ENCODE measurements at regions of chr7 and their contacts with region 1.

Region 1: DNA sequence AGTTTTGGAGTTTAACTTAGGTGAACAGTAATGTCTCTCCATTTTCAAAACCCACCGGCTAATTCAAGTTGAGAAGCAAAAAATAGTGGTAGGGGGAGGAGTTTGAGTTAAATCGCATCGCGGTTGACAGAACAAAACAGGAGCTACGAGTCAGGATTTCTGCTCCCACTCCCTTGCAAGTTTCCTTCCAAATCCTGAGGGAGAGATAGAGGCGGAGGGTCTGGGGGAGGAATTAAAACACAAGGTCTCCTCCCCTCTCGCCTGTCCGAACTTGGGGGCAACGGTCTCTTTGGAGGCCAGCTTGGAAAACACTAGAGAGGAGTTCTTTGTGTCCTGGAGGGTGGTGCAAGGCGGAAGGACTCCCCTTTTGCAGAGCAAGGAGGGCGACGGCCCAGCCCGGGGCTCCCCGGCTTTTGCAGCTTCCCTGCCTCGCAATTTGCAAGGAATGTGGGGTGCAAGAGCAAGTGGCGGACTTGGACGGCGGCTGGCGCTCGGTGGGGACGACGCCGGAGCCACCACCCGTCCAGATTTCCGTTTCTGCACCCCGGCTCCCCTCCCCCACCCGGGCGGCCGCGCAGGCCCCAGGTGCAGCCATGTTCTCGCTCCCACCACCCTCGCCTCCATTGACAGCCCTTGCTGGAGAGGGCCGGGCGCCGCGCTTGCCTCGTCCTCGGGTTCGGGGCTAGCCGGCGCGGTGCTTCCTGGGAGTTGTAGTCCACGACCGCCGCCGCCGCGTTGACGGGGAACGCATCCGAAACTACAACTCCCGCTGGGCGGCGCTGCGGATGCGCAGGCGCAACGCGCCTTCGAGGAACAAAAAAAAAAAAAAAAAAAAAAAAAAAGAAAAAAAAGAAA is 454 bp upstream of the GTF2I start:
- DNase-seq: peak; percentile 94
- ATAC-seq: peak; percentile 85
- H3K4me3 ChIP-seq: peak overlapping the region; percentile 73 to 91 (median 84)
- H3K27ac ChIP-seq: peak overlapping the region; percentile 98
- H3K4me1 ChIP-seq: peaks cover 66% of the 10 kb centered on the region
- H3K27me3 ChIP-seq: no peaks in the 10 kb centered on the region; a peak in 1 of 5 replicates
- CTCF ChIP-seq: peak; percentile 38
- EP300 ChIP-seq: no peak
- POLR2A ChIP-seq: peak; percentile 73
- RAD21 ChIP-seq: peak; percentile 54; the same call in 1 of the 2 replicates

Region 2: GRCh38 chr7:74443543-74444247 is 213.4 kb before region 1 on chr7:
- CTCF ChIA-PET with region 1: no interaction called
- POLR2A ChIA-PET with region 1: no interaction called
- in situ Hi-C with region 1: no loop called
- intact Hi-C with region 1: no loop called
- DNase-seq: no peak
- ATAC-seq: no peak; the same call in 2 of the 3 replicates
- H3K4me3 ChIP-seq: no peak overlapping the region
- H3K27ac ChIP-seq: no peak overlapping the region
- H3K4me1 ChIP-seq: peaks cover 36% of the 10 kb centered on the region
- H3K27me3 ChIP-seq: peaks cover 0 to 5% of the 10 kb centered on the region in 2 experiments; a peak in 3 of 5 replicates
- CTCF ChIP-seq: no peak
- EP300 ChIP-seq: no peak
- POLR2A ChIP-seq: no peak
- RAD21 ChIP-seq: no peak

Region 3: DNA sequence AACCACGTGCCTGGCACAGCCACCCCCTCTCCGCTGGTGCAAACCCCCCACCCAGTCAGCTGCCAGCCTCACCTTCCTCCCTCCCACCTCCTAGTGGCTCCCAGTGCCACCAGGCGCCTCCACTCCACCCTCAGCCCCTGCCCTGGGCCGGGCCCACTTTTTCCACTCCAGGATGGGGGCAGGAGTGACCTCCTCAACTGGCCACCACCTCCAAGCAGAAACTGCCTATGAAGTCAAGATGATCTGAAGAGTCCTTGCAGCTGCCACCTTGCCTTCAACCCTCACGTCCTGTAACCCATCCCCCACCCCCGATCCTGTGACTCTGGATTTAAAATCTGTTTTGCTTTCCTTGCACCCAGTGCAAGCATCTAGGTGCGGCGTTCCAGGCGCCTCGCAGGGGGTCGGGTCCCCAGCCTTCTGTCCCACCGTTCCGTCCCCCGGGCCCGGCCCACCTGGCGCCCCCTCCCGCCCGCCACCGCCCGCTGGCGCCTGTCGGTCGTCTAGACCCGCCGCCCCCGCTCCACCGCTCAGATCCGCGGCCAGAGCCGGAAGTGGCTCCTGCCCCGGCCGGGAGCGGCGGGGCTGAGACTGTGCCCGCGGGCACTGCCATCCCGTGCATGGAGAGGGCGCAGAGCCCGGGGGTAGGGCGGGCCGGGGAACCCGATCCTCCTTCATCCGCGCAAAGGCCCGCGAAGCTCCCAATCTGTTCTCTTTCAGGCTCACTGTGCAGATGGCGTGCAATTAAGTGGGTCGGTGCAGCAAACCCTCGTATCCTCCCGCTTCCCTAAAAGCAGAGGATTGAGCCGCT is 50.8 kb before region 1 on chr7:
- CTCF ChIA-PET with region 1: no interaction called
- POLR2A ChIA-PET with region 1: interaction called, 23 read pairs
- in situ Hi-C with region 1: no loop called
- intact Hi-C with region 1: loop called (anchors 1 kb)
- DNase-seq: no peak
- ATAC-seq: no peak
- H3K4me3 ChIP-seq: no peak overlapping the region
- H3K27ac ChIP-seq: peak overlapping the region; percentile 22
- H3K4me1 ChIP-seq: peaks cover 37% of the 10 kb centered on the region
- H3K27me3 ChIP-seq: no peaks in the 10 kb centered on the region
- CTCF ChIP-seq: no peak
- EP300 ChIP-seq: no peak
- POLR2A ChIP-seq: no peak
- RAD21 ChIP-seq: no peak

Region 4: DNA sequence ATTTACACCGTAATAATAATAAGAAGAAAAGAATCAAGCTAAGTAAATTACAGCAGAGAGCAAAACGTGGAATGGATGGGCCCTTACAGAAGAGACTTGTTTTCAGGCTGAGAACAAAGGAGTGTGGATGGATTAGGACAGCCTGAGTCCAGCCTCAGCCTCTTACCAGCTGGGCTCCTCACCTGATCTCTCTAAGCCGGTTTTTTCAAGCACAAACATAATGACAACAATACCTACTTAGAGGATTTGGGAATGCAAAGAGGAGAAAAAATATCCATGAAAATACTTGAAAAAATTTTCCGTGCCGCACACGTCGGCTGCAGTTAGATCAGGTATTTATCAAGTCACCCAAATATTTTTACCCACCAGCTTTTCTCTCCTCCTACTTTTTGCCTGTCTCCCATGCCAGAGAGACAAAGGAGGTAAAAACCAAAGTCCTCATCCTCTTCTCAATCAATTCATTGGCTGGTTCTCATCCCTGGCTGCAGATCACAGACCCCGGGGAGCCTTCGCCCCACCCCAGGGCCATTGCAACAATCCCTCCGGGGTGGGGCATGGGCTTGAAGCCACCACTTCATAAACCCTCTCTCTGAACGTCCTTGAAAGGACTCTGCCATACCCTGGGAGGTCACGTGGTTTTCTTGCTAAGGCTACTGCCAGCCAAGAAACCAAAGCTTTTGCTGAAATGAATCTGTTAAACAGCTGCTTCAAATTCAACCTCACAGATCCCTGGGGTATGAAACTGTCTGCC is 29.2 kb before region 1 on chr7:
- CTCF ChIA-PET with region 1: no interaction called
- POLR2A ChIA-PET with region 1: interaction called, 25 read pairs
- in situ Hi-C with region 1: no loop called
- intact Hi-C with region 1: no loop called
- DNase-seq: peak; percentile 93
- ATAC-seq: peak; percentile 90
- H3K4me3 ChIP-seq: peak overlapping the region; percentile 36 to 53 (median 44); a peak in 5 of 6 replicates
- H3K27ac ChIP-seq: peak overlapping the region; percentile 81
- H3K4me1 ChIP-seq: peaks cover 63% of the 10 kb centered on the region
- H3K27me3 ChIP-seq: no peaks in the 10 kb centered on the region
- CTCF ChIP-seq: no peak
- EP300 ChIP-seq: peak in 1 of 2 experiments; percentile 56; a peak in 1 of 4 replicates
- POLR2A ChIP-seq: no peak
- RAD21 ChIP-seq: peak; percentile 18; the same call in 1 of the 2 replicates

Region 5: DNA sequence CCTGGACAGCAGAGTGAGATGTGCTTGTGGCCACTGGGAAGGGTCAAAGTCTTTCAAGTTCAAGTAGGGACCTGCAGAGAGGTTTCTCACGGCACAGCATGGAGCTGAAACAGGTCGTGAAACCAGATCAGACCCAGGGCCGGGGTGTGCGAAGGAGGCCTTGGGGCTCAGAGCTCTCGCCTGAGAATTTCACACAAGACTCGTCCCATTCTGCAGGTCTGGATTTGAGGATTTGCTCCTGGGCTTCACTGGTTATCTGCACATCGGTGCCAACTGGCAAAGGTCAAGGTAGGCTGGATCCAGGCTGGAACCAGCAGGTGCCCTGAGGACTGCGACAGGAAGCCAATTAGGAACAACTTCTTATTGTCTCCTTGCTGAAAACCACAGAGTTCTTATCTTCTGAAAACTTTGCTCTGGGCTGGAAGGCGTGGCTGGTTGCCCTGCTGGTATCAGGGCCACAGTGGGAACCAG is 23.6 kb before region 1 on chr7:
- CTCF ChIA-PET with region 1: no interaction called
- POLR2A ChIA-PET with region 1: interaction called, 25 read pairs
- in situ Hi-C with region 1: no loop called
- intact Hi-C with region 1: no loop called
- DNase-seq: no peak
- ATAC-seq: no peak
- H3K4me3 ChIP-seq: no peak overlapping the region
- H3K27ac ChIP-seq: no peak overlapping the region
- H3K4me1 ChIP-seq: peaks cover 69% of the 10 kb centered on the region
- H3K27me3 ChIP-seq: no peaks in the 10 kb centered on the region
- CTCF ChIP-seq: no peak
- EP300 ChIP-seq: no peak
- POLR2A ChIP-seq: no peak
- RAD21 ChIP-seq: no peak

Region 6: DNA sequence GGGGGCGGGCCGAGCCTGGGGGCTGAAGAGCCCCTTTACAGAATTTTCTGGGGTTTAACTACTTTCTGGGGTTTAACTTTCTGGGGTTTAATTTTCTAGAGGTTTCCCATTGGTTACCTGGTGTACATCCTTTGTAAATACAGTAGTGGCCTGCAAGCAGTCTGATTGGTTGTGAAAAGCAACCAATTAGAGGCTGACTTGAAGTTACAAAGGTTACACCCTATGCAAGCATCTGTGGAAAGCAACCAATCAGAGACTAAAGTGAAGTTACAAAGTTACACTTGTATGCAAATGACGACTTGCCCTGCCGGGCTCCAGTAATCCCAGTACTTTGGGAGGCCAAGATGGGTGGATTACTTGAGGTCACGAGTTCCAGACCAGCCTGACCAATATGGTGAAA is 27.9 kb after region 1 on chr7:
- CTCF ChIA-PET with region 1: no interaction called
- POLR2A ChIA-PET with region 1: no interaction called
- in situ Hi-C with region 1: no loop called
- intact Hi-C with region 1: no loop called
- DNase-seq: no peak
- ATAC-seq: peak; percentile 35; the same call in 1 of the 3 replicates
- H3K4me3 ChIP-seq: no peak overlapping the region
- H3K27ac ChIP-seq: no peak overlapping the region
- H3K4me1 ChIP-seq: no peaks in the 10 kb centered on the region
- H3K27me3 ChIP-seq: no peaks in the 10 kb centered on the region
- CTCF ChIP-seq: no peak
- EP300 ChIP-seq: no peak
- POLR2A ChIP-seq: no peak
- RAD21 ChIP-seq: no peak